Activated naive CD4-positive, alpha-beta T cell treated with anti-CD3 and anti-CD28 coated beads for 36 hours (primary cell): ENCODE measurements at regions of chr7 and their contacts with region 1.

Region 1: GRCh38 chr7:32942786-32943653 is 14.2 kb upstream of the FKBP9 start:
- DNase-seq: peak; percentile 74
- H3K4me3 Mint-ChIP-seq: peak overlapping the region; percentile 66
- H3K27ac Mint-ChIP-seq: no peak overlapping the region
- H3K4me1 Mint-ChIP-seq: peaks cover 18% of the 10 kb centered on the region
- H3K27me3 Mint-ChIP-seq: no peaks in the 10 kb centered on the region

Region 2: DNA sequence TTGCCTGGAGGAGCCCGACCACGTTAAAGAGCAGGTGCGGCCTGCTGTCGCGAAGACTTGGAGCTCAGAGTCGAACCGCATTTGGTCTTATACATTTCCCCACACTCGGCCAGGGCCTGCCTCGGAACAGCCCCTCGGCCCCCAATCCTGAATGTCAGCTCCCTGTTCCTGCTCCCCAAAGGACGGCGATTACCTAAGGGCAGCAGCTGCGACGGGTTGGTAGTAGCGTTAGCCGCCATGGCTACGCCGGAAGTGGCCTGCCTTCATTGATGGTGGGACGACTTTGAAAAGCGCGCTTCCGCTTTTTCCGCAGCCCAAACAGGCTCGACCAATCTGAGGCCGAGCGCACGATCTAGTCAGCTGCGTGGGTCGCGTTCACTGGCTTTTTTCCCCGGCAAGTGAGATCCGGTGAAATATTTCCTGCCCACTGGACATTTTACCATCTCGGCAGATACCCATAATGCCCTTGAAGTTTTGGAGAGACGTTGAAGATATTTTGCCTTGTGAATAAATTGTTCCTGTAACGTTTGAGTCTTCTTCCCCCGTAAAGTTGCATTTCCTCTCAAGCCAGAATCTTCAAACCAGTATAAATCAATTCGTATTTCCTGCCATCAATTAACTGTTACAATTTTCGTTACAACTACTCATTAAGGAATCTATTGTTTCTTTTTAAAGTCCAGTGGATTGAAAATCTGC is 452.7 kb before region 1 on chr7 and contains the start of gene LSM5:
- CTCF ChIA-PET with region 1: no interaction called
- intact Hi-C with region 1: loop called (anchors 1 kb)
- DNase-seq: peak; percentile 94
- H3K4me3 Mint-ChIP-seq: peak within 1 kb of the TSS; percentile 86
- H3K27ac Mint-ChIP-seq: peak within 1 kb of the TSS; percentile 95
- H3K4me1 Mint-ChIP-seq: peaks cover 27% of the 10 kb centered on the region
- H3K27me3 Mint-ChIP-seq: no peaks in the 10 kb centered on the region
- total RNA-seq, gene LSM5: 132 to 141 TPM

Region 3: DNA sequence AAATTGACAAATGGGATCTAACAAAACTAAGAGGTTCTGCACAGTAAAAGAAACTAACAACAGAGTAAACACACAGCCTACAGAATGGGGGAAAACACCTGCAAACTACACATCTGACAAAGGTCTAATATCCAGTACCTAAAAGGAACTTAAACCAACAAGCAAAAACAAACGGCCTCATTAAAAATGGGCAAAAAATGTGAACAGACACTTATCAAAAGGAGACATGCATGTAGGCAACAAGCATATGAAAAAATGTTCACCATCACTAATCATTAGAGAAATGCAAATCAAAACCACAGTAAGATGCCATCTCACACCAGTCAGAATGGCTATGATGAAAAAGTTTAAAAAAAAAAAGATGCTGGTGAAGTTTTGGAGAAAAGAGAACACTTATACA is 248.8 kb before region 1 on chr7:
- CTCF ChIA-PET with region 1: no interaction called
- intact Hi-C with region 1: loop called (anchors 1 kb)
- DNase-seq: no peak
- H3K4me3 Mint-ChIP-seq: no peak overlapping the region
- H3K27ac Mint-ChIP-seq: no peak overlapping the region
- H3K4me1 Mint-ChIP-seq: peaks cover 8% of the 10 kb centered on the region
- H3K27me3 Mint-ChIP-seq: peaks cover 2% of the 10 kb centered on the region

Region 4: GRCh38 chr7:32803406-32804141 is 139.4 kb before region 1 on chr7:
- CTCF ChIA-PET with region 1: interaction called, 6 read pairs
- intact Hi-C with region 1: loop called (anchors 1 kb)
- DNase-seq: no peak
- H3K4me3 Mint-ChIP-seq: no peak overlapping the region
- H3K27ac Mint-ChIP-seq: no peak overlapping the region
- H3K4me1 Mint-ChIP-seq: no peaks in the 10 kb centered on the region
- H3K27me3 Mint-ChIP-seq: no peaks in the 10 kb centered on the region

Region 5: DNA sequence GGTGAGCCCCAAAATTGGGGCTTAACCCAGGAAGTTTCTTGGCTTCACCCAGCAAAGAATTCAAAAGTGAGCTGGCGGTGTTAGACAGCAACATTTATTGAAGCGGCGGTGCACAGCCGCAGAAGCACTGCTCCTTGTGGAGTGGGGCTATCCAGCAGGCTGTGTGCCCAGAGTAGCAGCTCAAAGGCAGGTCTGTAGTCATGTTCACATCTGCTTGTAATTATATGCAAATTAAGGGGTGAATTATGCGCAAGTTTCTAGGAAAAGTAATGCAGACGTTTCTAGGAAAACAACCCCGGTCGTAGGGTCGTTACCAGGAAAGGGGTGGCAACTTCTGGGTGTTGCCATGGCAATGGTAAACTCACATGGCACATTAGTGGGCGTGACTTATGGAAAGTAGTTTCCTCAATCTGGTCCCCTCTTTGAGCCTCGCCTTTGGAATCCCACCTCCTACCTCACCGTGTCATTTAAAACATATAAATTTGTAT is 37.8 kb before region 1 on chr7:
- CTCF ChIA-PET with region 1: interaction called, 7 read pairs
- intact Hi-C with region 1: loop called (anchors 5 kb)
- DNase-seq: peak; percentile 88
- H3K4me3 Mint-ChIP-seq: peak overlapping the region; percentile 70
- H3K27ac Mint-ChIP-seq: peak overlapping the region; percentile 87
- H3K4me1 Mint-ChIP-seq: peaks cover 18% of the 10 kb centered on the region
- H3K27me3 Mint-ChIP-seq: no peaks in the 10 kb centered on the region

Region 6: DNA sequence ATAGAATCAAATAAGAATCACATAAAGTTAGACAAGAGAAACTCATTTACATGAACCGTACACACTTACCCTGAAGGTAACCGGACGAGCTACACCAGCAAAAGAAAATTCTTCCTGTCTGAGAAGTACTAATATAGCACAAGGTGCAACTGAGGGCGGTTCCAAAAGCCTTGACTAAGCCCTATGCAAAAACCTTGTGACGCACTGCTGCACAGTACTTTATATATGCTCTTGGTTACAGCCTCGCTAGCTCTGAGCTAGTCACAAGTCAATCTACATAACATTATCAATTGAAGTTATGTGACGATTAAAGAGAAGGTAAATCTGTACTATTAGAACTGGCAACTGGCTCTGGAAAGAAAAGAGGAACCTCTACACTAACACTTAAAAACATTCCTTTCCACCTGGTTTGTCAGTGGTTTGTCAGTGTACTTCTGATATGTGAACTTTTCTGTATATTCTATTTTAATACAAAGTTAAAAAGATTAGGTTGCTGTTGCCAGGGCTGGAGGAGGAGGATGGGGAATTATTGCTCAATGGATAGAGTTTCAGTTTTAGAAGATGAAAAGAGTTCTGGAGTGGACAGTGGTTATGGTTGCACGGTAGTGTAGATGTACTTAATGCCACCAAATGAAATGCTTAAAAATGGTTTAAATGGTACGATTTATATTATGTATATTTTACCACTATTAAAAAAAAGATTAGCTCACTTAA is 97.9 kb after region 1 on chr7:
- CTCF ChIA-PET with region 1: no interaction called
- intact Hi-C with region 1: loop called (anchors 1 kb)
- DNase-seq: peak; percentile 84
- H3K4me3 Mint-ChIP-seq: peak overlapping the region; percentile 69
- H3K27ac Mint-ChIP-seq: peak overlapping the region; percentile 86
- H3K4me1 Mint-ChIP-seq: peaks cover 47% of the 10 kb centered on the region
- H3K27me3 Mint-ChIP-seq: no peaks in the 10 kb centered on the region